Body of pancreas (tissue), 4 donors: ENCODE measurements at regions of chr1 and their contacts with region 1.

Region 1: GRCh38 chr1:42766741-42767509 is at the starts of genes C1orf50 and P3H1:
- DNase-seq: peak; percentile 100
- ATAC-seq: peak; percentile 98
- H3K4me3 ChIP-seq: peak within 1 kb of the TSS; percentile 88 to 96
- H3K27ac ChIP-seq: peak within 1 kb of the TSS; percentile 65 to 92 (median 78)
- H3K4me1 ChIP-seq: peaks cover 28% of the 10 kb centered on the region
- H3K27me3 ChIP-seq: no peaks in the 10 kb centered on the region
- CTCF ChIP-seq: no peak
- POLR2A ChIP-seq: peak; percentile 84 to 93 (median 93)
- total RNA-seq, gene C1orf50: 2.0 to 2.1 TPM
- total RNA-seq, gene P3H1: 16.9 to 34.9 TPM

Region 2: DNA sequence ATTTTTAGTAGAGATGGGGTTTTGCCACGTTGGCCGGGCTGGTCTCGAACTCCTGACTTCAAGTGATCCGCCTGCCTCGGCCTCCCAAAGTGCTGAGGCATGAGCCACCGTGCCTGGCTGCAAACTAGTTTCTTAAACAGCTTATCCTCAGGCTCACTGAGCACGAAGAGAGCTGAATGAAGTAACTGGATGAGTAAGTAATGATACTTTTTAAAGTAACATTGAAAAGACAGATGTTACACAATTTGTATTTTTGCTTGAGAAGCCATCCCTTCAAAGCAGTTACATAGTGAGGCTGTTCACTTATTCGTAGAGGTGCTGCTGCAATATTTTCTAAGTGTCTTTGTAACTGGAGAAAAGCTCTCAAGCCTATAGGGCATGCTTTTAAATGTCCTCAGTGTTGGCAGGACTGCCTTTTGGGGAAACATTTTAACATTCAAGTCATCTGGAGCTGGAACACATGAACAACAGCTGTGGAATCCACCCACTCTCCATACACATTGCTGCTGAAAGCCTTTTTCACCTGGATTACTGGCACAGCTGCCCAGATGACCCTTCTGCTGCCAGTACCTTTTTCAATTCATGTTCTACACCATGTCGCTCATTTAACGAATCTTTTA is 87.5 kb before region 1 on chr1:
- intact Hi-C with region 1: loop called (anchors 10 kb)
- DNase-seq: no peak
- ATAC-seq: no peak
- H3K4me3 ChIP-seq: no peak overlapping the region
- H3K27ac ChIP-seq: no peak overlapping the region
- H3K4me1 ChIP-seq: peaks cover 29% of the 10 kb centered on the region
- H3K27me3 ChIP-seq: no peaks in the 10 kb centered on the region
- CTCF ChIP-seq: no peak
- POLR2A ChIP-seq: no peak

Region 3: GRCh38 chr1:42703888-42704464 is 62.9 kb before region 1 on chr1:
- intact Hi-C with region 1: no loop called
- DNase-seq: no peak
- ATAC-seq: no peak
- H3K4me3 ChIP-seq: no peak overlapping the region
- H3K27ac ChIP-seq: no peak overlapping the region
- H3K4me1 ChIP-seq: no peaks in the 10 kb centered on the region
- H3K27me3 ChIP-seq: no peaks in the 10 kb centered on the region
- CTCF ChIP-seq: no peak
- POLR2A ChIP-seq: no peak